ENCODE measurements at regions of chr1 and their contacts with region 1.

Region 1: DNA sequence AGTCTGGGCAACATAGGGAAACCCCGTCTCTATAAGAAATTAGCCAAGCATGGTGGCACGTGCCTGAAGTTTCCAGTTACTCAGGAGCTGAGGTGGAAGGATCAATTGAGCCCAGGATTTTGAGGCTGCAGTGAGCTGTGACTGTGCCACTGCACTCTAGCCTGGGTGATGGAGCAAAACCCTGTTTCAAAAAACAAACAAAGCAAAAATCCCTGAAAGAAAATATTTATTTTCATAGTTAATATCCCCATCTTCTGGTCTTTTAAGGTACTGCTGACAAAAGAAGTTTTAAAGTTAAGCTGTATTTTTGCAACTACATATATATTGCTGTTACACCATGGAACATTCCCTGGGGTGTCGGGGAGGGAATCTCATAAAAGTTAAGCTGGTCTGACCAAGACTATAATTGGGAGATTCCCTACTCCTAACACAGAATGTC is 26.0 kb downstream of the VAMP4 start:
- DNase-seq: no peak
- H3K4me3 Mint-ChIP-seq: no peak overlapping the region
- H3K27ac Mint-ChIP-seq: no peak overlapping the region
- H3K4me1 Mint-ChIP-seq: no peaks in the 10 kb centered on the region
- H3K27me3 Mint-ChIP-seq: no peaks in the 10 kb centered on the region
- CTCF ChIP-seq: peak; percentile 36

Region 2: DNA sequence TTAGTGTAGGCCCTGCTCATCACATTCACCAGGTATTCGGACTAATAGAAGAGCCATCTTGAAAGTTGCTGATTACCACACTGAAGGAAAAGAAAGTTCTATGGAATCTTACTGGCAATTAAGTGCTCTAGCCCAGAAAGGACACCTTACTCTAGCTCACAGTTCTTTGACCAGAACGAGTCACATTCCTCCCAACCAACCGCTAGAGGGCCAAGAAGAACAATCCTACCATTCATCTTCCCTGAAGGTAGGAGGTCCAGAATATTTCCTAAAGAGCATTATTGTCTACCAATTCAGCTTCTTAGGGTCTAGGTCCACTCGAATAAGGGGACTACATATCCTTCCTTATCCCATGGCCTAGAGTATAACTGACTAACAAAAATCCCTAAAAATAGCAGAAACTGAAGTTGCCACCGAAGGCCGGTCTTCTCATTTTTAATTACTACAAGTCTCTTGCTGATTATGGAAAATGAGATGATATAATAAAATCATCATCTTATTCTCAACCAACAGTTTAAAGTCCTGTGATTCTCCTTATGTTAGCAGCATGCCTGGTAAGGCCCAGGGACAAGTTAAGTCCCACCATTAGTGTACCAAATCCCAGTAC is 470.3 kb before region 1 on chr1:
- CTCF ChIA-PET with region 1: interaction called, 3 read pairs
- intact Hi-C with region 1: loop called (anchors 10 kb)
- DNase-seq: peak; percentile 59
- H3K4me3 Mint-ChIP-seq: no peak overlapping the region
- H3K27ac Mint-ChIP-seq: no peak overlapping the region
- H3K4me1 Mint-ChIP-seq: no peaks in the 10 kb centered on the region
- H3K27me3 Mint-ChIP-seq: peaks cover 42% of the 10 kb centered on the region
- CTCF ChIP-seq: peak; percentile 62

Region 3: DNA sequence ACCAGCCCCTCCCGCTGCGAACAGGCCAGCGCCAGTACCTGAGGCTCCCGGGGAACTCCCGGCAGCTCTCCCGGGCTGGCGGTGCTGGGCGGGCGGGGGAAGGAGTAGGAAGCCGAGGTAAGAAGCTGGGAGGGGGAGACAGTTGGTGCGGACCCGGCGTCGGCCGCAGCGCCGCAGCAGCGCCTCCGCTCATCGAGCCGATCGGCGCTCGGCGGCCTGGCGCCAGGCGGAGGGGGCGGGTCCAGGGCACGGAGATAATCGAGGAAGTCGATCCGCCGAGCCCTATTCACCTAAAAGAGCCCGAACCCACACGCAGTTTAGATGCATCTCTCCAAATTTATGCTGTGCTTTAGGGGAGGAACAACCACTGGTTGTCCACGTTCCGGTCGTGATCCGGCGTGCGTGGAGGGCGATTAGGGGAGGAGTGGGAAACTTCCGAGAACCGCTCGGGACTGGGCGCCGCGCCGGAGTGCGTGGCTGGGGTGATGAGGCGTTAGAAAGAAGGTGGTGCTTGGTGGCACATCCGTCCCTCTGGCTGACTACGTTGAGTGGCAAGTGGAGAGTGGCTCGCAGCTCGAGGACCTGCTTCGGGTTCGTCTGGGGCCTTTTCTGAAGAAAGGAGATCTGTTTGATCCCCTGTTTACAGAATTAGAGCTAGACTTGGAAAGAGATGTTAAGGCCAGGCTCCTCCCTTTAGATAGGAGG is 26.2 kb after region 1 on chr1 and contains the start of gene VAMP4:
- CTCF ChIA-PET with region 1: interaction called, 11 read pairs
- intact Hi-C with region 1: no loop called
- DNase-seq: peak; percentile 89
- H3K4me3 Mint-ChIP-seq: peak within 1 kb of the TSS; percentile 89
- H3K27ac Mint-ChIP-seq: peak within 1 kb of the TSS; percentile 95
- H3K4me1 Mint-ChIP-seq: peaks cover 22% of the 10 kb centered on the region
- H3K27me3 Mint-ChIP-seq: no peaks in the 10 kb centered on the region
- CTCF ChIP-seq: no peak
- total RNA-seq, gene VAMP4: 7.4 and 7.5 TPM in 2 replicates

Region 4: DNA sequence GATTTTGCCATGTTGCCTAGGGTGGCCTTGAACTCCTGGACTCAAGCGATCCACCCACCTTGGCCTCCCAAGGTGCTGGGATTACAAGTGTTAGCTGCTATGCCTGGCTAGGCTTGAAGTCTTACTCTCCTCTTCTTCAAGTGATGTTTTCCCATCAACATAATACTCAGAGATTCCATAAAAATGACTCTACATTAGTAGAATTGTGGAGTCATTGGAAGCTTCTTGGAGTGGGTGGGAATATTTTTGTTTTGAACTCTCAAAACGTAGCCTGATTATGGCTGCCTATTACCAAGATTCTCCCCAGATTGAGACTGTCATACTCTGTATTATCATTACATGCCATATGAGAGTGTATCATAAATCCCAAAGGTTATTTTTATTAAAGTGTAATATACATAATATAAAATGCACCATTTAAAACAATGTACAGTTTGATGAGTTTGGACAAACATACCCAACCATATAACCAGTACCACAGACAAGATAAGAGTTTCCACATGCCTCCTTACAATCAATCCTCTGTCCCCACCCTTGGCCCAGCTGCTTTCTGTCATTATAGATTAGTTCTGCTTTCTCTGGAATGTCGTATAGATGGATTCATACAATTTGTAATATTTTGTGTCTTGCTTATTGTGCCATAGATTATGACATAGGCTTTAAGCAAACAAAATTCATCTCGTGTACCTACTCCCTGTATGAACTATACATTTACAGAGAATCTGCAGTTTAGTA is 117.4 kb after region 1 on chr1:
- CTCF ChIA-PET with region 1: no interaction called
- intact Hi-C with region 1: no loop called
- DNase-seq: no peak
- H3K4me3 Mint-ChIP-seq: no peak overlapping the region
- H3K27ac Mint-ChIP-seq: no peak overlapping the region
- H3K4me1 Mint-ChIP-seq: no peaks in the 10 kb centered on the region
- H3K27me3 Mint-ChIP-seq: peaks cover 23% of the 10 kb centered on the region
- CTCF ChIP-seq: no peak

Region 5: DNA sequence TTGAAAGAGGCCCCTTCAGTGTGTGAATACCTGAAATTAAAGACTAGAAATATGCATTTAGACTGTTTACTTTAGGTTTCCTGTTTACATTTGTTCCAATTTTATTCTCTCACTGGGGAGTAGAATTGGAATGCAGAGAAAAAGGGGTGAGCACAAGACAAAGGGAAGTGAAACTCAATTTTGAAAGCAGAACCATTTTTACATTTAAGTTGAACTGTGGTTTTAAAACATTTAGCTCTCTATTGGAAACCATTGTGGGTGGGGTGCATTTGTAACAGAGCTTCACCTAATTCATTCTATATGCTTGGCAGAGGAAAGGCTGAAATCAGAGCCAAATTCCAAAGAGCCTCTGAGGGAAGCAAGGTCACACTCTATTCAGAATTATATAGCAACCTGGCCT is 469.4 kb after region 1 on chr1:
- CTCF ChIA-PET with region 1: no interaction called
- intact Hi-C with region 1: no loop called
- DNase-seq: no peak
- H3K4me3 Mint-ChIP-seq: no peak overlapping the region
- H3K27ac Mint-ChIP-seq: no peak overlapping the region
- H3K4me1 Mint-ChIP-seq: peaks cover 16% of the 10 kb centered on the region
- H3K27me3 Mint-ChIP-seq: no peaks in the 10 kb centered on the region
- CTCF ChIP-seq: no peak

Measured in Calu3 (cell line).